ENCODE measurements at regions of chr9 and their contacts with region 1.

Region 1: DNA sequence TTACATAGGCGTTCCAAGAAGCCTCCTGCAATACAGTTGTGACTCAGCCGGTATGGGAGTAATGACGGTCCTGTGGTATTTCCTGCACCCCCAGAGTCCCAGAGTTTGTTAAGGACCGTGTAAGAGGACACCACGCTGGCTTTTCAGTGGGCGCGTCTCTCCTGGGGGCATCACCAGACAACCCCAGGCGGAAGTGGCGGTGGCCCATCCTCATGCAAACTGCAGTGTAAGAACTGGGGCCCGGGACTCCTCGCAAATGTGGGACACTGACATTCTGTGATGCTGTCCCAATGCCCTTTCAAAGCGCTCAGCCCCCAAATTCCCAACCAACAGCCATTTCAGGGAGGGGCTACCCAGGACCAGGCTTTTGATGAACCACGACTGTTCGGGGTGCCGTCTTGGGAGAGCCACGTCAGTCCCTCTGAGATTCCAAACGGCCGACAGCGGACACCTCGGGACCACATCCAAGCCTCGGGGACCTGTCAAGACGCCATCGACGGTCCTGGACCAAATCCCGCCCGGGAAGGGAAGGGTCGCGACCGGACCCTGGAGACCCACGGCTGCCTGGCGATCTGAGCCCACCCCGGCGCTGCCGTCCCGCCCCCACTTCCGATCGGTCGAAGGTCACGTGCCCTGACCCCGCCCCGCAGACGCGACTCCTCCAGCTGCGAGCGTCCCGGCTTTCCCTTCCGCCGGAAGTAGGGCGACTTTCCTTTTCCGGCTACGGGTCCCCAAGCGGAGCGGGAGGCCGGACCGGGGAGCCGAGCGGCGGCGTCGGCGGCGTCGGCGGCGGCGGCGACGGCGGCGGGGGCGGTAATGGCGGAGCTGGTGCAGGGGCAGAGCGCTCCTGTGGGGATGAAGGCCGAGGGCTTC is at the start of gene FUBP3:
- H3K4me3 ChIP-seq: peak within 1 kb of the TSS; percentile 63
- H3K27ac ChIP-seq: peak within 1 kb of the TSS; percentile 53
- H3K4me1 ChIP-seq: no peaks in the 10 kb centered on the region
- CTCF ChIP-seq: no peak

Region 2: DNA sequence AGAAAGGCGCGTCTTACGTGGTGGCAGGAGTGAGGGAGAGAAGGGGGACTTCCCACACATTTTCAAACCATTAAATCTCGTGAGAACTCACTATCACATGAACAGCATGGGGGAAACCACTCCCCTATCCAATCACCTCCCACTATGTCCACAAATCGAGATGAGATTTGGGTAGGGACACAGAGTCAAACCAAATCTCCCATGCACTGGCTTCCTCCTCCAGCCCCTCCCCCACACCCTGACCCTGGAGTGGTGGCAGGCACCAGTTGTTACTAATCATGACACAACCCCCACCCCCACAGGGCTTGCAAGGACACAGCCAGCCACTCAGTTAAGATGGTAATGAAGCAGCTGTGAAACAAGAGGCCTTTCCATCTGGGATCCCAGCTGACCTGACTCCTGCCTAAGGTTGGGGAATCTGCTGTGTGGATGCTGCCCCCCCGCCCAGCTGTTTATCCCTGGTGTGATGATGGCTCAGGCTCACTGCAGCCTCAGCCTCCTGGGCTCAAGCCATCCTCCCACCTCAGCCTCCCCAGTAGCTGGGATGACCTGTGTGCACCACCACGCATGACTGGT is 56.8 kb before region 1 on chr9:
- CTCF ChIA-PET with region 1: no interaction called
- POLR2A ChIA-PET with region 1: interaction called, 11 read pairs
- H3K4me3 ChIP-seq: no peak overlapping the region
- H3K27ac ChIP-seq: no peak overlapping the region
- H3K4me1 ChIP-seq: no peaks in the 10 kb centered on the region
- CTCF ChIP-seq: no peak

Region 3: GRCh38 chr9:130535818-130536561 is 43.1 kb before region 1 on chr9:
- CTCF ChIA-PET with region 1: no interaction called
- POLR2A ChIA-PET with region 1: interaction called, 10 read pairs
- H3K4me3 ChIP-seq: no peak overlapping the region
- H3K27ac ChIP-seq: no peak overlapping the region
- H3K4me1 ChIP-seq: no peaks in the 10 kb centered on the region
- CTCF ChIP-seq: no peak

Region 4: GRCh38 chr9:130593020-130593419 is 13.9 kb after region 1 on chr9:
- CTCF ChIA-PET with region 1: no interaction called
- POLR2A ChIA-PET with region 1: interaction called, 12 read pairs
- H3K4me3 ChIP-seq: no peak overlapping the region
- H3K27ac ChIP-seq: no peak overlapping the region
- H3K4me1 ChIP-seq: no peaks in the 10 kb centered on the region
- CTCF ChIP-seq: no peak